ENCODE measurements at regions of chr3 and their contacts with region 1.

Region 1: DNA sequence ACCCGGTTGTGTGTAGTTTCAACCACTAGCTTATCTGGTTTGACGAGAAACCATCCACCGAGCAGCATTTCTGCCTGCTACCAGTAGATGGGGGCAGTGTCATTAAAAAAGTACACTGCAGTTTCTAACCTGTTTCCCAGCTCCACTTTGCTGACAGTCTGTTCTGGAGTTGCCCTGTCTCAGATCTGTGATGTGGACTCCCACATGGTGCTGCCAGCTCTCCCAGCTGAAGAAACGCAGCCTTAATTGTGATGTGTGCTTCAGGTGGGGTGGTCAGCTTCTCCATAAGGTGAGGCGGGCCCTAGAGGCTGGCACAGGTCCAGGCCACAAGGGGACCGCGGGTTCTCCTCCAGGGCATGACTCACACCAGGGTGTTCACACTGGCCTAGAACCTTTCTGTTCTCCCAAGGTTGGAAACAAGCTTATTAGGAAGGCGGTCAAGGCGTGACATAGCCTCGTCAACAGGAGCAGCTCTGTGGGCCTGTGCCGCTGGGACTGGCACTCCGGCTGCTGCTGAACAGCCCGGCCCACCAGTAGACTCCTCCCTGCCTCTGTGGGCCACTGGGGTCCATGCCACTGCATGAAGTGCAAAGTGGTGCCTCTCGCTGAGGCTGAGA is 2.9 kb upstream of the FAM43A start:
- DNase-seq: peak; percentile 87
- ATAC-seq: peak; percentile 37
- H3K4me3 ChIP-seq: no peak overlapping the region
- H3K4me3 Mint-ChIP-seq: peak overlapping the region; percentile 23
- H3K27ac ChIP-seq: no peak overlapping the region
- H3K27ac Mint-ChIP-seq: peak overlapping the region; percentile 26
- H3K4me1 ChIP-seq: peaks cover 15 to 29% of the 10 kb centered on the region in 2 donors
- H3K4me1 Mint-ChIP-seq: peaks cover 43% of the 10 kb centered on the region
- H3K27me3 ChIP-seq: no peaks in the 10 kb centered on the region
- H3K27me3 Mint-ChIP-seq: no peaks in the 10 kb centered on the region
- CTCF ChIP-seq: peak; percentile 90

Region 2: GRCh38 chr3:194381460-194381875 is 301.3 kb before region 1 on chr3:
- CTCF ChIA-PET with region 1: no interaction called
- POLR2A ChIA-PET with region 1: no interaction called
- intact Hi-C with region 1: no loop called
- DNase-seq: no peak
- ATAC-seq: no peak
- H3K4me3 ChIP-seq: no peak overlapping the region
- H3K4me3 Mint-ChIP-seq: no peak overlapping the region
- H3K27ac ChIP-seq: no peak overlapping the region
- H3K27ac Mint-ChIP-seq: no peak overlapping the region
- H3K4me1 ChIP-seq: no peaks in the 10 kb centered on the region
- H3K4me1 Mint-ChIP-seq: no peaks in the 10 kb centered on the region
- H3K27me3 ChIP-seq: peaks cover 0 to 6% (median 0%) of the 10 kb centered on the region in 4 experiments
- H3K27me3 Mint-ChIP-seq: peaks cover 34% of the 10 kb centered on the region
- CTCF ChIP-seq: no peak

Region 3: GRCh38 chr3:194738254-194739093 is 55.7 kb after region 1 on chr3:
- CTCF ChIA-PET with region 1: interaction called, 64 read pairs
- POLR2A ChIA-PET with region 1: interaction called, 51 read pairs
- intact Hi-C with region 1: loop called (anchors 1 kb)
- DNase-seq: no peak
- ATAC-seq: no peak
- H3K4me3 ChIP-seq: no peak overlapping the region
- H3K4me3 Mint-ChIP-seq: no peak overlapping the region
- H3K27ac ChIP-seq: no peak overlapping the region
- H3K27ac Mint-ChIP-seq: peak overlapping the region; percentile 27
- H3K4me1 ChIP-seq: peaks cover 25 to 35% of the 10 kb centered on the region in 2 donors
- H3K4me1 Mint-ChIP-seq: peaks cover 28% of the 10 kb centered on the region
- H3K27me3 ChIP-seq: no peaks in the 10 kb centered on the region
- H3K27me3 Mint-ChIP-seq: no peaks in the 10 kb centered on the region
- CTCF ChIP-seq: no peak

Region 4: DNA sequence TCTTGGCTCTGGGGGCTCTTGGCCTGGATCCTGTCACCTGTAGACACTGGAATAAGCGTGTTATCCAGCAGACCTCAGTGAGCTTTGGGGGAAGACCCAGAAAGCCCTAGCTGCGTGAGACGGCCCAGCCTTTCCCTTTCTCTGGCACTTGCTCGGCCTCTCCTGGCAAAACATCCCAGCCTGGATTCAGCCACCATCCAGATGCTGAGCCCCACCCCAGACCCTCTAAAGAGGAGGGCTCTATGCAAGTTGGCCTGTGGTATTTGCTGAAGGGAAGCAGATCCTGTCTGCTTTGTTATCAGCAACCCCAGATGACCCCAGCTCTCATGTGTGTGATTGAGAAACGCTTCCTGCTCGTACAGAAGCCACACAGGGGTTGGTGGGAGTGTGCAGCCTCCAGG is 270.0 kb after region 1 on chr3:
- CTCF ChIA-PET with region 1: interaction called, 57 read pairs
- POLR2A ChIA-PET with region 1: interaction called, 5 read pairs
- intact Hi-C with region 1: loop called (anchors 1 kb)
- DNase-seq: no peak
- ATAC-seq: no peak
- H3K4me3 ChIP-seq: no peak overlapping the region
- H3K4me3 Mint-ChIP-seq: no peak overlapping the region
- H3K27ac ChIP-seq: no peak overlapping the region
- H3K27ac Mint-ChIP-seq: no peak overlapping the region
- H3K4me1 ChIP-seq: no peaks in the 10 kb centered on the region
- H3K4me1 Mint-ChIP-seq: no peaks in the 10 kb centered on the region
- H3K27me3 ChIP-seq: peaks cover 0 to 4% (median 0%) of the 10 kb centered on the region in 4 experiments
- H3K27me3 Mint-ChIP-seq: peaks cover 6% of the 10 kb centered on the region
- CTCF ChIP-seq: no peak

Region 5: DNA sequence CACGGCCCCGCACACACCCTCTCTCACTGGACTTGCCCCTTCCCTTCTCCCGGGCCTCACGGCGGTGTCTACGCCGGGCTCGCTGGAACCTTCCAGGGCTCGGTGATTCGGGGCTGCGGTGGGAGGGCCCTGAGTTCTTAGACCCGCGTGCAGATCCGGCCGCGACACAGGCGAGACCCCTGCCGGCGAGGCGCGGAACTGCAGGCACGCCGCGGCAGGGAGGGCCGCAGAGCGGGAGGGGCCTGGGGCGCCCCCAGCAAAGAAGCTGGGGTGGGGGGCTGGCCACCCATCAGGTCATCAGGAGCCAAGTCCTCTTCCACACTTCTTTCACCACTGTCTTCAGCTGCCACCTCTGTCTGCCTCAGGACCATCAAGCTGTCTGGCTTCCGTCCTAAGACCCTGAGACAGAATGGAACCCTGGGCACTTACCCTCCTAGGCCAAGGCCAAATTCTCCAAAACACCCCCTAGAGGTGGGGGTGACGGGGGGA is 423.7 kb after region 1 on chr3:
- CTCF ChIA-PET with region 1: interaction called, 163 read pairs
- POLR2A ChIA-PET with region 1: interaction called, 5 read pairs
- intact Hi-C with region 1: loop called (anchors 1 kb)
- DNase-seq: peak; percentile 85
- ATAC-seq: peak; percentile 98
- H3K4me3 ChIP-seq: peak overlapping the region in 3 of 5 experiments; percentile 13 to 40 (median 21)
- H3K4me3 Mint-ChIP-seq: peak overlapping the region; percentile 80
- H3K27ac ChIP-seq: no peak overlapping the region
- H3K27ac Mint-ChIP-seq: peak overlapping the region; percentile 79
- H3K4me1 ChIP-seq: peaks cover 15 to 24% of the 10 kb centered on the region in 2 donors
- H3K4me1 Mint-ChIP-seq: peaks cover 34% of the 10 kb centered on the region
- H3K27me3 ChIP-seq: no peaks in the 10 kb centered on the region
- H3K27me3 Mint-ChIP-seq: no peaks in the 10 kb centered on the region
- CTCF ChIP-seq: peak; percentile 97

Region 6: DNA sequence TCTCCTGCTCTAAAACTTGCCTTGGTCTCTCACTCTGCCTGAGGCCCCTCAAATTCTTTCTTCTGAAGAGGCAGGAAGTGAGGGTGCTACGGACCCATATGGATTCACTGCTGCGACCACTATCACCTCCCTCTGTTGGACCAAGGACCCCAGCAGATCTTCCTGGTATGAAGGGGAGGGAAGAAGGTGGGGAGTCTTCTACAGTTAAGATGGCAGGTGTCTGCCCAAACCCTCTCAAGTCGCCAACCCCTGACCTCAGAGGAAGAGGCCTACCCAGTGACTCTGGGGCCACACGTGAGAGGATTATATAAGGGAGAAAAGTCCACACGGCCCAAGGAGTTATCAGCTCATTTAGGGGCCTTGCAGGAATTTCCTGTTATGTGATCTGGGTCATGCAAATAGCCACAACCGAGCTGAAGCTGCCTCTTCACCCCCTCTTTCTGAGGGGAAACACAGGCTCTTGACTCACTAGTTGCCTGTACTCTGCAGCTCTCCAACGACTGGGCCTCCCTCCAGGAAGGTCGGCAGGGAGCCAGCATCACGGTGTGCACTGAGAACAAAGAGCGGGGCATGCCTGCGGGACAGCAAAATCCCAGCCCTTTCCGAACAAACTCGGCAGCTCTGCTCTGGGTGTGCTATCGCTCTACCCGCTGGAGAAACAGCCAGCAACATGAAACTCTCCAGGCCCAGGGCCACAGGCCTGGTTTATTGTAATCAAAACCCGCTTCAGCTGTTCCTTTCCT is 472.2 kb after region 1 on chr3:
- CTCF ChIA-PET with region 1: interaction called, 11 read pairs
- POLR2A ChIA-PET with region 1: interaction called, 9 read pairs
- intact Hi-C with region 1: no loop called
- DNase-seq: peak; percentile 66
- ATAC-seq: peak; percentile 45
- H3K4me3 ChIP-seq: peak overlapping the region in 1 of 5 experiments; percentile 35
- H3K4me3 Mint-ChIP-seq: peak overlapping the region; percentile 78
- H3K27ac ChIP-seq: peak overlapping the region; percentile 31 to 55
- H3K27ac Mint-ChIP-seq: peak overlapping the region; percentile 94
- H3K4me1 ChIP-seq: peaks cover 66 to 83% of the 10 kb centered on the region in 2 donors
- H3K4me1 Mint-ChIP-seq: peaks cover 91% of the 10 kb centered on the region
- H3K27me3 ChIP-seq: no peaks in the 10 kb centered on the region
- H3K27me3 Mint-ChIP-seq: no peaks in the 10 kb centered on the region
- CTCF ChIP-seq: no peak

Region 7: DNA sequence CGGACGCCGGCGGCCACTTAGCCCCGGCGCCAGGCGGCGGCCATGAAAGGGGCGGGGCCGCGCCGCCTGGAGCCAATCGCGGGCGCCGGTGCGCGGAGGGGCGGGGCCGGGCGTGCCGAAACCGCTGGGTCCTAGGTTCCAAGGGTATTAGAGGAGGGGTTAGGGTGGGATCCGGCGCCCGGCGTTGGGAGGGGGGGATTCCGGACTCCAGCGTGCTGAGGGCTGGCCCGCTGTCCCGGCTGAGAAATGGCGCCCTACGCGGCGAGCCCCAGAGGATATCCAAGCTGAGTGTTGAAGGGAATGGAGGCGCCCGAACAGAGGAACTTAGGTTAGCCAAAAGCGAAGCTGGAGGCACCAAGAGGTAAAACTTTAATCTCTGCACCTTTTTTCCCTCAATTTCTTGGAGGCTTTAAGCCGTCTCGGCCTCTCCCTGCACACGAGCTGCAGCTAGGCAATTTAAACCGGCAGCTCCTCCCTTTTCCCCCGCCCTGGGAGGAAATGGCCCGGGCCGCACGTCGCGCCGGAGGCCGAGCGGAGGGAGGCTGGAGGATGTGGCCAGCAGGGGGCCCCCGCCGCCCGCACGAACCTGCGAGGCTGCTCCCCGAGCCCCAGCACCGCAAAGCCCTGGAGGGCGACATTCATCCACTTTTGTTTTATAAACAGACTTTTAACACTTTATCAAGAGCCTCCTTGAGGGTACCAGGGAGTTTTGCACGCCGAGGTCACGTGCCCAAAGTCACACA is 588.5 kb after region 1 on chr3 and contains the start of gene XXYLT1:
- CTCF ChIA-PET with region 1: interaction called, 91 read pairs
- POLR2A ChIA-PET with region 1: interaction called, 6 read pairs
- intact Hi-C with region 1: loop called (anchors 1 kb)
- DNase-seq: peak; percentile 91
- ATAC-seq: peak; percentile 84
- H3K4me3 ChIP-seq: peak within 1 kb of the TSS; percentile 76 to 90 (median 84)
- H3K4me3 Mint-ChIP-seq: peak within 1 kb of the TSS; percentile 91
- H3K27ac ChIP-seq: peak within 1 kb of the TSS; percentile 27 to 52
- H3K27ac Mint-ChIP-seq: peak within 1 kb of the TSS; percentile 88
- H3K4me1 ChIP-seq: peaks cover 17 to 18% of the 10 kb centered on the region in 2 donors
- H3K4me1 Mint-ChIP-seq: peaks cover 19% of the 10 kb centered on the region
- H3K27me3 ChIP-seq: no peaks in the 10 kb centered on the region
- H3K27me3 Mint-ChIP-seq: no peaks in the 10 kb centered on the region
- CTCF ChIP-seq: peak; percentile 83
- total RNA-seq, gene XXYLT1: 8.8 and 11.2 TPM in 2 replicates

Measured in B cell (primary cell).